Activated CD8-positive, alpha-beta T cell treated with anti-CD3 and anti-CD28 coated beads, Interleukin-2, amount 10 ng/mL, durations not matched to agents 7 days and 5 days (primary cell): ENCODE measurements at regions of chr3 and their contacts with region 1.

Region 1: GRCh38 chr3:9396700-9397521 is 504 bp upstream of the SETD5 start:
- DNase-seq: peak; percentile 99
- ATAC-seq: peak; percentile 77
- H3K4me3 Mint-ChIP-seq: peak overlapping the region; percentile 94
- H3K27ac Mint-ChIP-seq: peak overlapping the region; percentile 96
- H3K4me1 Mint-ChIP-seq: peaks cover 68% of the 10 kb centered on the region
- H3K27me3 Mint-ChIP-seq: no peaks in the 10 kb centered on the region

Region 2: DNA sequence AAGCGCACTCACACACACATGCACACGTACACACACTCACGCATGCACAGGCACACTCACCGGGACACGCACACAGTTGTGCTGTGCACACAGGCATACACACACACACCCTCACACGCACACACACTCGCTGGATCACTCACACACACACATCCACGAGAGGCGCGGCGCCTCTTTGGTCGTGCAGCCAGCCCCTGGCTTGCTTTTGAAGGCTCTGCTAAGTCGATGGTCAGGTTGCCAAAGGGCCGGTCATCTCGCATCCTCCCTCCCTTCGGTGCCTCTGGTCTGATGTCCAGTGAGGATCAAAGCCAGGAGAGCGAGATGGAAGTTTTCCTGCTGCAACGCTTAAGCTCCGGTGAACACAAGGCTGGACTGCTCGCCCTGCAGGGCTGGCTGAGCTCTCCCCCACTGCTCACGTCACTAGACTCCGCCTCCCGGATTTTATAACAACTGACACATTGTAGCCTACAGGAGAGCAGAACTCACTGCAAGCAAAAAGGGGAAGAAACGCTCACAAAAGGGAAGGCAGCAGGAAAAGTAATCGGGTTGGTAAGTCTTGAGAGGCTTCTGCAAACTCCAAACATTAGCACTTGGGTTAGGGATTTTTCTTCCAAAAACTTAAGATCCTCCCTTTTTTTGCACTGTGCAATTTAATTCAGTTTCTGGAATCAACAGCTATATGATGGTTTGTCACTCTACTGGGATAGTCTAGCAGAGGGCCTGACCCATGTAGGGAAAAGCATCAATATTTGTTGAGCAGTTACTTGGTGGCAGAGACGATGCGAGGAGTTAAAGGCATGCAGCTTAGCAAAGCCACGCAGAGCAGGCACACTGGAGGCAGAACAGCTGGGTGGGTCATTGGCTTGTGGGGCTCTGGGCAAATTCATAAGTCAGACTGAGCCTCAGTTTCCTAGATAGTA is 147.4 kb before region 1 on chr3 and contains the start of gene SRGAP3:
- CTCF ChIA-PET with region 1: no interaction called
- POLR2A ChIA-PET with region 1: no interaction called
- DNase-seq: peak; percentile 92
- ATAC-seq: peak; percentile 100
- H3K4me3 Mint-ChIP-seq: peak within 1 kb of the TSS; percentile 82
- H3K27ac Mint-ChIP-seq: peak within 1 kb of the TSS; percentile 40
- H3K4me1 Mint-ChIP-seq: peaks cover 38% of the 10 kb centered on the region
- H3K27me3 Mint-ChIP-seq: peaks cover 23% of the 10 kb centered on the region
- total RNA-seq, gene SRGAP3: 5.3 to 5.9 TPM

Region 3: GRCh38 chr3:9362731-9363530 is 34.0 kb before region 1 on chr3 and contains the start of gene THUMPD3:
- CTCF ChIA-PET with region 1: interaction called, 7 read pairs
- POLR2A ChIA-PET with region 1: interaction called, 89 read pairs
- DNase-seq: peak; percentile 95
- ATAC-seq: peak; percentile 96
- H3K4me3 Mint-ChIP-seq: peak within 1 kb of the TSS; percentile 95
- H3K27ac Mint-ChIP-seq: peak within 1 kb of the TSS; percentile 99
- H3K4me1 Mint-ChIP-seq: peaks cover 35% of the 10 kb centered on the region
- H3K27me3 Mint-ChIP-seq: no peaks in the 10 kb centered on the region
- total RNA-seq, gene THUMPD3: 45.8 to 55.1 TPM

Region 4: GRCh38 chr3:9416139-9416780 is 19.3 kb after region 1 on chr3:
- CTCF ChIA-PET with region 1: interaction called, 4 read pairs
- POLR2A ChIA-PET with region 1: interaction called, 15 read pairs
- DNase-seq: no peak
- ATAC-seq: no peak
- H3K4me3 Mint-ChIP-seq: no peak overlapping the region
- H3K27ac Mint-ChIP-seq: no peak overlapping the region
- H3K4me1 Mint-ChIP-seq: peaks cover 30% of the 10 kb centered on the region
- H3K27me3 Mint-ChIP-seq: no peaks in the 10 kb centered on the region

Region 5: DNA sequence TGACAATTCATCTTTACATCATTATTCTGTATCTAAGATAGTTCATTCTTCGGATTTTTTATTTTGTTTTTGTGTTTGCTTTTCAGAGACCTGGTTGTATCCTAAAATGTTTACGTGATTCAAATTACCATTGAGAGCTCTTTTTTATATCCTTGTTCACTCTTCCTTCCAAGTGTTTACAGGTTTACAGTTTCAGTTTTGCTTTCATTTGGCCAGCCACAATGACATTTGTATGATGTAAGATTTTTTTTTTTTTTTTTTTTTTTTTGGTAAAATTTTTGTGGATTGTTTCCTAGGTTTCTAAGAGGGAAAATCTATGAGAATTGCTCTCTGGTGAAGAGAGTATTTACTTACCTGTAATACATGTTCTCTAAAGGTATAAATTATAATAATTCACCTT is 55.5 kb after region 1 on chr3:
- CTCF ChIA-PET with region 1: interaction called, 7 read pairs
- POLR2A ChIA-PET with region 1: interaction called, 20 read pairs
- DNase-seq: peak; percentile 31
- ATAC-seq: peak; percentile 53
- H3K4me3 Mint-ChIP-seq: peak overlapping the region; percentile 48
- H3K27ac Mint-ChIP-seq: peak overlapping the region; percentile 89
- H3K4me1 Mint-ChIP-seq: peaks cover 36% of the 10 kb centered on the region
- H3K27me3 Mint-ChIP-seq: no peaks in the 10 kb centered on the region